Panc1 (cell line): ENCODE measurements at regions of chr20 and their contacts with region 1.

Region 1: GRCh38 chr20:53738039-53738944 is 144.7 kb upstream of the ZNF217 start:
- DNase-seq: peak; percentile 88
- ATAC-seq: peak; percentile 78
- H3K4me3 ChIP-seq: peak overlapping the region; percentile 3 to 33
- H3K27ac ChIP-seq: peak overlapping the region; percentile 100
- H3K4me1 ChIP-seq: peaks cover 74% of the 10 kb centered on the region
- H3K27me3 ChIP-seq: no peaks in the 10 kb centered on the region
- CTCF ChIP-seq: no peak

Region 2: GRCh38 chr20:53487461-53488200 is 250.7 kb before region 1 on chr20:
- CTCF ChIA-PET with region 1: no interaction called
- POLR2A ChIA-PET with region 1: no interaction called
- in situ Hi-C with region 1: no loop called
- intact Hi-C with region 1: no loop called
- DNase-seq: no peak
- ATAC-seq: no peak
- H3K4me3 ChIP-seq: no peak overlapping the region
- H3K27ac ChIP-seq: no peak overlapping the region
- H3K4me1 ChIP-seq: no peaks in the 10 kb centered on the region
- H3K27me3 ChIP-seq: no peaks in the 10 kb centered on the region; the same call in 1 of the 2 replicates
- CTCF ChIP-seq: no peak

Region 3: GRCh38 chr20:53786445-53787267 is 48.4 kb after region 1 on chr20:
- CTCF ChIA-PET with region 1: no interaction called
- POLR2A ChIA-PET with region 1: interaction called, 6 read pairs
- in situ Hi-C with region 1: no loop called
- intact Hi-C with region 1: loop called (anchors 5 kb)
- DNase-seq: no peak
- ATAC-seq: peak; percentile 72
- H3K4me3 ChIP-seq: peak overlapping the region in 1 of 2 experiments; percentile 5; a peak in 2 of 4 replicates
- H3K27ac ChIP-seq: peak overlapping the region; percentile 100
- H3K4me1 ChIP-seq: peaks cover 59% of the 10 kb centered on the region
- H3K27me3 ChIP-seq: no peaks in the 10 kb centered on the region
- CTCF ChIP-seq: no peak